HEK293 (cell line): ENCODE measurements at regions of chr12 and their contacts with region 1.

Region 1: DNA sequence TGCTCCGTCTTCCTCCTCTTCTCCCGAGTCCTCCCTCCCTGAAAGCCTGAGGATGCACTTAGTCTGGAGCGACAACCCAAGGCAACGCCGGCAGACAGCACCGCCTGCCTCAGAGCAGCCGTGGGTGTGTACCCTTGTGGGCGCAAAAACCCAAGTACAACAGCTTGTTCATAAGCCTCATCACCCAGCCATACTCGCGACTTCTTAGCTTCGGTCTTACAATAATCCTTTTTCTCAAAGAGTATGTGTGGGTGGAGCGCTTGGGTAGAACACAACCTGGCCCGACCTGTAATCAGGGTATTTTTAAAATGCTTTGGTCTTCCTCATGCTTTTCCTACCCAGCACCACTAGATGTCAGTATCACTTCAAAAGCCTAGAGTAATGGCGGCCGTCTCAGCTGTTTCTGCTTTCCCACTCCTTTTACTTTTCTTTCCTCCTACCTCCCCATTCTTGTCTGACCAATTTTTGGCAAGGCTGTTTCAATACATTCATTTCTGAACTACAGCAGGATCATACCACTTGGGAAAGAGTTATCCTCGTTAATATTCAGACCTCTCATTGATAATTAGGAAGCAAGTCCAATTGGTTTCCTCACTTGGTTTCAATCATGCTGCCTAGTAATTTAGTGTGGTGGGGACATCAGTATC is 198.9 kb downstream of the EPS8 start:
- H3K4me3 ChIP-seq: peak overlapping the region; percentile 36
- H3K27ac ChIP-seq: no peak overlapping the region
- H3K4me1 ChIP-seq: no peaks in the 10 kb centered on the region
- CTCF ChIP-seq: peak; percentile 93

Region 2: GRCh38 chr12:15341371-15341770 is 248.9 kb before region 1 on chr12:
- CTCF ChIA-PET with region 1: no interaction called
- POLR2A ChIA-PET with region 1: no interaction called
- H3K4me3 ChIP-seq: no peak overlapping the region
- H3K27ac ChIP-seq: no peak overlapping the region
- H3K4me1 ChIP-seq: no peaks in the 10 kb centered on the region; the same call in 1 of the 2 replicates
- CTCF ChIP-seq: no peak

Region 3: GRCh38 chr12:15532364-15532977 is 57.8 kb before region 1 on chr12:
- CTCF ChIA-PET with region 1: interaction called, 103 read pairs
- POLR2A ChIA-PET with region 1: no interaction called
- H3K4me3 ChIP-seq: no peak overlapping the region
- H3K27ac ChIP-seq: no peak overlapping the region
- H3K4me1 ChIP-seq: peaks cover 9% of the 10 kb centered on the region
- CTCF ChIP-seq: peak; percentile 42; the same call in 1 of the 2 replicates

Region 4: GRCh38 chr12:15846887-15847286 is 256.6 kb after region 1 on chr12:
- CTCF ChIA-PET with region 1: interaction called, 13 read pairs
- POLR2A ChIA-PET with region 1: no interaction called
- H3K4me3 ChIP-seq: no peak overlapping the region
- H3K27ac ChIP-seq: no peak overlapping the region
- H3K4me1 ChIP-seq: no peaks in the 10 kb centered on the region
- CTCF ChIP-seq: no peak

Region 5: GRCh38 chr12:15856097-15856982 is 266.0 kb after region 1 on chr12:
- CTCF ChIA-PET with region 1: interaction called, 78 read pairs
- POLR2A ChIA-PET with region 1: no interaction called
- H3K4me3 ChIP-seq: no peak overlapping the region
- H3K27ac ChIP-seq: no peak overlapping the region
- H3K4me1 ChIP-seq: no peaks in the 10 kb centered on the region
- CTCF ChIP-seq: peak; percentile 40; the same call in 1 of the 2 replicates

Region 6: DNA sequence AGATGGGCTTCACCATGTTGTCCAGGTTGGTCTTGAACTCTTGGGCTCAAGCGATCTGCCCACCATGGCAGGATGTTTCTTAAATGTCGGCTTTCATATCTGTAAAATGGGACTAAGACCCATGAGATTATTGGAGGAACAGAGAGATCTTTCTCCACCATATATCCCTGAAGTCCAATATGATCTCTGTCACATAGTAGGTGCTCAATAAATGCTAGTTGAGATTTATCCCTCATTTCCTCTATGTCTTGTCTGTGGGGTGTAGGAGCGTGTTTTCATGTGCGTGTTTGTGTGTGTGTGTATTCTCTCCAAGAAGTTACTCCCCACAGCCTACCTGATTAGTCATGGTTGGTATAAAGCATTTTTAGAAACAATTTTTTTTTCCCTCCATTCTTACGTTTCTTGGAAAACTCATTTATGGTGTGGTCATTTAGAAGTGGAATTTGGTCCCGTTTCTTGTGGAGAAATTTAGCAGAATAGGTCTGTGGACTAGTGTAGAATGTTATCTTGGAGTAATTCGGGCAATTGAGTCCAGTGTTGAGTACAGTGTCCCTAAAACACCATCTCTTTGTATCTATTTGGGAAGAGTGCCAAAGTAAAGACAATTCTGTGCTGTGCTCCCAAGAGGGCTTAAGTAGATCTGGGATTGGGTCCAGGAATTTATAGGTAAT is 296.2 kb after region 1 on chr12:
- CTCF ChIA-PET with region 1: interaction called, 11 read pairs
- POLR2A ChIA-PET with region 1: no interaction called
- H3K4me3 ChIP-seq: no peak overlapping the region
- H3K27ac ChIP-seq: peak overlapping the region; percentile 33
- H3K4me1 ChIP-seq: peaks cover 19% of the 10 kb centered on the region
- CTCF ChIP-seq: no peak